ENCODE measurements at regions of chr2 and their contacts with region 1.

Region 1: GRCh38 chr2:41869542-41870264 is 178.1 kb upstream of the PKDCC start:
- DNase-seq: peak; percentile 59
- H3K4me3 ChIP-seq: no peak overlapping the region
- H3K27ac ChIP-seq: no peak overlapping the region
- H3K4me1 ChIP-seq: no peaks in the 10 kb centered on the region
- H3K27me3 ChIP-seq: peaks cover 3 to 4% of the 10 kb centered on the region in 2 experiments
- CTCF ChIP-seq: peak; percentile 68 to 84
- POLR2A ChIP-seq: no peak

Region 2: DNA sequence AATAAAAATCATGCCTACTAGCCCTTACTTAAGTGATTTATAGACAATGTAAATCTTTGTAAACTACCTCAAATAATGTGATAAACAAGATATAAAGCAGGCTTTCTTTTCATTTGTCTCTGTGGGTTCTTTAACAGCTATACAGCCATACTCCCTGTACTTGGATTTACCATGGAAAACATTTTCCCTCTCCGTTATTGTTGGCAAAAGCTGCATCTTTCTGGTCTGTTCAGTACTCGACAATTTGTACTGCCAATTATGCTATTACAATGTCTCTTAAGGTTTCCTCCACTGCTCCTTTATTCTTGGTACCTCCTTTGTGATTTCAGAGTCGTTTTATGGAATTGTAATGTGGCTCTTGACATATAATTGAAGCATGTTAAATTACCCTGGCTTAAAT is 248.1 kb before region 1 on chr2:
- CTCF ChIA-PET with region 1: no interaction called
- POLR2A ChIA-PET with region 1: no interaction called
- dilution Hi-C with region 1: no loop called
- intact Hi-C with region 1: no loop called
- DNase-seq: no peak
- H3K4me3 ChIP-seq: no peak overlapping the region
- H3K27ac ChIP-seq: no peak overlapping the region
- H3K4me1 ChIP-seq: no peaks in the 10 kb centered on the region
- H3K27me3 ChIP-seq: no peaks in the 10 kb centered on the region
- CTCF ChIP-seq: no peak
- POLR2A ChIP-seq: no peak

Region 3: DNA sequence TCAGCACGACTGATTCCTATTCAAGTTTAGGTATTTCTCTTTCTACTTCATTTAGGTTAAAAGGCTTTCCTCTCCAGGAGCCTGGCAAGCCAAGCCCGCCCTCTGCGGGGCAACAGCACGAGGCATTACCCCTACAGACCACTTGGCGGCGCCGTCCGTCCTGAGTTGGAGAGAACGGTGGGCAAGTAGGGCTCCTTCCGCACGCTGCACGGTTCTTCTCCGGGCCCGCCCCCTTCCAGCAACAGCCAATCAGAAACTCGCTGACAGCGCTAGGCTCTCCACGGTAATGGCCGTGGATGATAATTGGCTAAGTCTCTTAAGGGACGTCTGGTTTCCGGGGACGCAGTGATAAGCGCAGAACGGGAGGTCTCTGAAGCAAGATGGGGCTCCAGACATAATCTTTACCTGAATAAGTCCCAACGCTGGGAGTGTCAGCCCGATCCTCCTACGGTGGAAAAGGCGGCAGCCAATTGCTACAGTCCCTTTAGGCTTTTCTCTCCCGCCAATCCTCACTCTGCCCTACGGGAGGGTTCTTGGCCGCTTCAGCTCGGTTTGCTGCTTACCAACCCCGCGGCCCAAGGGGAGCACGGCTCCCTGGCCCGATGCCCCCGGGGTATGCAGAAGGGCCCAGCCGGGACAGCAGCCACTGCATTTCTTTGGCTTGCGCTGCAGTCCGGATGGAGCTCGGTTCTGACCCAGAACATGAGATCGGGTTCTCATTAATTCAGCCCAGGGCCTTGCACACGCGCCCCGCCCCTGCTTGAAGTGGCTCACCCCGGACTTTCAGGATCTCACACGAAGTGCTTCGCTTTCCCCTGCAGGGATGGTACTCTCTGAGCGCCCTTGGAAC is 28.8 kb before region 1 on chr2:
- CTCF ChIA-PET with region 1: interaction called, 6 read pairs
- POLR2A ChIA-PET with region 1: no interaction called
- dilution Hi-C with region 1: no loop called
- intact Hi-C with region 1: loop called (anchors 1 kb)
- DNase-seq: peak; percentile 94
- H3K4me3 ChIP-seq: peak overlapping the region; percentile 27 to 69 (median 60)
- H3K27ac ChIP-seq: no peak overlapping the region
- H3K4me1 ChIP-seq: peaks cover 7% of the 10 kb centered on the region
- H3K27me3 ChIP-seq: peaks cover 15 to 18% of the 10 kb centered on the region in 2 experiments
- CTCF ChIP-seq: peak; percentile 92 to 96
- POLR2A ChIP-seq: peak; percentile 28

Region 4: GRCh38 chr2:41886757-41887156 is 17.1 kb after region 1 on chr2:
- CTCF ChIA-PET with region 1: interaction called, 19 read pairs
- POLR2A ChIA-PET with region 1: interaction called, 3 read pairs
- dilution Hi-C with region 1: no loop called
- intact Hi-C with region 1: no loop called
- DNase-seq: peak; percentile 21
- H3K4me3 ChIP-seq: no peak overlapping the region
- H3K27ac ChIP-seq: no peak overlapping the region
- H3K4me1 ChIP-seq: no peaks in the 10 kb centered on the region
- H3K27me3 ChIP-seq: peaks cover 2 to 3% of the 10 kb centered on the region in 2 experiments
- CTCF ChIP-seq: no peak
- POLR2A ChIP-seq: no peak

Region 5: DNA sequence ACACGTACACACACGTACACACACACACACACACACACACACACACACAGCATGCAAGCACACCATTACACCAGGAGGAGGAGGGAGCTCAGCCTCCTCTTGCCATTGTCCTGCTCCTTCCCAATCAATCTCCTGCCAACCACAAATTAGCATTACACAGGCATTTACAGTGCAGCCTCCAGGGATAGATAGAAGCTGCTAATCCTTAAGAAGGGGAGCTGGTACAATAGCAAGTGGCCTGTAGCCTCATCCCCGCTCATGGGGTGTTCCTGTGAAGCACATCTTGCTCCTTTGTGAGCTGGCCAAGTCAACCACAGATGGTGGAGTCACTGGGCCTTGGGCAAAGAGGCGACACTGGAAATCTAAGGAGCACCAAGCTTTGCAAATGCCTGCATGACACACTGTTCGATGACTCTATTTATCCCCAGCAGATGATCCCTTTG is 67.8 kb after region 1 on chr2:
- CTCF ChIA-PET with region 1: no interaction called
- POLR2A ChIA-PET with region 1: no interaction called
- dilution Hi-C with region 1: no loop called
- intact Hi-C with region 1: no loop called
- DNase-seq: no peak
- H3K4me3 ChIP-seq: no peak overlapping the region
- H3K27ac ChIP-seq: no peak overlapping the region
- H3K4me1 ChIP-seq: no peaks in the 10 kb centered on the region
- H3K27me3 ChIP-seq: peaks cover 3 to 8% of the 10 kb centered on the region in 2 experiments
- CTCF ChIP-seq: no peak
- POLR2A ChIP-seq: no peak

Region 6: DNA sequence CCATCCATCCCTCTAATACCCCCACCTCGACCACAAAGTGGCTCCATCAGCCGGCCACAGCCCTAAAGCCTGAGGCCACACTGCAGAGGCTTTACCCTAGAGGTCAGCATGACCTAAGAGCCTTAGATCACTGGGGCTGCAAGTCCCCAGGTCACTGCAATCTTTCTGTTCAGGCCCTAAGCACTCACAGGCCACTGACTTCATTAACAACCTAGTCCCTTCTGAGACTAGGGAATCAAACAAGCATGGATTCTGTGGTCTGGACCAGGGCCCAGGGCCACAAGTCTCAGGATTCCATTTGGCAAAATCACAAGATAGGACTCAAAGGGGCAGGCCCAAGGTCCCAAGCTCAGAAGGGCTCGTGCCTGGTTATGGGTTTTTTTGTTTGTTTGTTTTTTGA is 141.1 kb after region 1 on chr2:
- CTCF ChIA-PET with region 1: interaction called, 21 read pairs
- POLR2A ChIA-PET with region 1: no interaction called
- dilution Hi-C with region 1: no loop called
- intact Hi-C with region 1: no loop called
- DNase-seq: no peak
- H3K4me3 ChIP-seq: no peak overlapping the region
- H3K27ac ChIP-seq: no peak overlapping the region
- H3K4me1 ChIP-seq: no peaks in the 10 kb centered on the region
- H3K27me3 ChIP-seq: no peaks in the 10 kb centered on the region
- CTCF ChIP-seq: no peak
- POLR2A ChIP-seq: no peak

Region 7: DNA sequence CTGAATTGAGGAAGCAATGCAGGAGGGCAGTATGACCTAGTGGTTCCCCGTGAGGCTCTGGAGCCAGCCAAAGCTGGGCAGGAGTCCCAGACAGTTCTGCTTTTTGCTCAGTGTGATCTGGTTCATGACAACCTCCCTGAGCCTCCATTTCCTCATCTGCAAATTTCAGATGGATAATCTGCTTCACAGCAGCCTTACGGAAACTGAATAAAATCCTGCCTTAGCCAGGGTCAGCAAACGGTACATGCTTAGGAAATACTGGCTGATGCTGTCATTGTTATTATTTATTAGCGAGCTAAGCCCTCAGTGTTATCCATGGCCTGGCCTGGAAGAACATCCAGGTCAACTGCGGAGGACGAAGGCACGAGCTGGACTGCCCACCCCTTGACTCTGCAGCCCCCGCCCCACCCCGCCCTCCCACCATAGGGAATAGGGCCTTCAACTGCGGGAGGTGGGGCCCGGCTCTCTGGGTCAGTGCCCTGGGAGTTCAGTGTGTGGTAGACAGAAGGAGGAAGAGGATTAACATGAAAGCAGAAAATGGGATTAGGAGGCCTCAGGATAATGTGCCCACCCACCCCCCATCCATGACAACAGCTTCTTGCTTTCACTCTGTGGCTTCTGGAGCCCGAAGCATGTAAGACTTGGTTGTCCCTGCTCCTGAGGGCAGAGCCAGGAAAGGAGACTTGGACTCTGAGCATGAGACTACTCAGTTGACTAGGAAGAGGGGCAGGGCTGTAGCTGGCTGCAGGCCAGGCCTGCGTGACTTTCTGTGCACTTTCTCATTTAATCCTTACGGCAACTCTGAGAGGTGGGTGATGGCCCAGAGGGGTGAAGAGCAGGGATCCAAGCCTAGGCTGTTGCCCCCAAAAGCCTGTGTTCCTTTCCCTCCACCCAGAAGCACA is 191.3 kb after region 1 on chr2:
- CTCF ChIA-PET with region 1: interaction called, 14 read pairs
- POLR2A ChIA-PET with region 1: no interaction called
- dilution Hi-C with region 1: no loop called
- intact Hi-C with region 1: no loop called
- DNase-seq: no peak
- H3K4me3 ChIP-seq: no peak overlapping the region
- H3K27ac ChIP-seq: no peak overlapping the region
- H3K4me1 ChIP-seq: no peaks in the 10 kb centered on the region
- H3K27me3 ChIP-seq: no peaks in the 10 kb centered on the region
- CTCF ChIP-seq: no peak
- POLR2A ChIP-seq: no peak

Region 8: GRCh38 chr2:42086500-42086953 is 216.8 kb after region 1 on chr2:
- CTCF ChIA-PET with region 1: interaction called, 625 read pairs
- POLR2A ChIA-PET with region 1: interaction called, 4 read pairs
- dilution Hi-C with region 1: loop called (anchors 25 kb)
- intact Hi-C with region 1: loop called (anchors 1 kb)
- DNase-seq: peak; percentile 69
- H3K4me3 ChIP-seq: no peak overlapping the region
- H3K27ac ChIP-seq: no peak overlapping the region
- H3K4me1 ChIP-seq: no peaks in the 10 kb centered on the region
- H3K27me3 ChIP-seq: peaks cover 3 to 4% of the 10 kb centered on the region in 2 experiments
- CTCF ChIP-seq: peak; percentile 62
- POLR2A ChIP-seq: no peak